PC-9 (cell line): ENCODE measurements at regions of chr13 and their contacts with region 1.

Region 1: GRCh38 chr13:41588899-41589298 is 131.5 kb downstream of the RGCC start:
- DNase-seq: peak; percentile 46 to 85
- H3K4me3 ChIP-seq: no peak overlapping the region
- H3K27ac ChIP-seq: peak overlapping the region; percentile 89
- H3K4me1 ChIP-seq: peaks cover 33% of the 10 kb centered on the region
- H3K27me3 ChIP-seq: no peaks in the 10 kb centered on the region
- CTCF ChIP-seq: no peak

Region 2: GRCh38 chr13:41603917-41604316 is 15.0 kb after region 1 on chr13:
- CTCF ChIA-PET with region 1: no interaction called
- POLR2A ChIA-PET with region 1: no interaction called
- intact Hi-C with region 1: loop called (anchors 2 kb)
- DNase-seq: peak; percentile 46 to 70
- H3K4me3 ChIP-seq: no peak overlapping the region
- H3K27ac ChIP-seq: no peak overlapping the region
- H3K4me1 ChIP-seq: peaks cover 13% of the 10 kb centered on the region
- H3K27me3 ChIP-seq: no peaks in the 10 kb centered on the region
- CTCF ChIP-seq: no peak

Region 3: GRCh38 chr13:41666644-41667043 is 77.7 kb after region 1 on chr13:
- CTCF ChIA-PET with region 1: no interaction called
- POLR2A ChIA-PET with region 1: no interaction called
- intact Hi-C with region 1: no loop called
- DNase-seq: no peak
- H3K4me3 ChIP-seq: no peak overlapping the region
- H3K27ac ChIP-seq: no peak overlapping the region
- H3K4me1 ChIP-seq: peaks cover 4% of the 10 kb centered on the region; the same call in 1 of the 2 replicates
- H3K27me3 ChIP-seq: no peaks in the 10 kb centered on the region
- CTCF ChIP-seq: no peak